Kidney (tissue), 22 donors: ENCODE measurements at regions of chr2 and their contacts with region 1.

Region 1: GRCh38 chr2:192162392-192163042 is 32.2 kb downstream of the TMEFF2 start:
- DNase-seq: peak in 4 of 5 donors; percentile 52 to 84 (median 76)
- H3K4me3 ChIP-seq: peak overlapping the region in 2 of 3 donors; percentile 31 to 38
- H3K27ac ChIP-seq: no peak overlapping the region
- H3K4me1 ChIP-seq: no peaks in the 10 kb centered on the region
- H3K27me3 ChIP-seq: no peaks in the 10 kb centered on the region
- CTCF ChIP-seq: peak; percentile 84

Region 2: DNA sequence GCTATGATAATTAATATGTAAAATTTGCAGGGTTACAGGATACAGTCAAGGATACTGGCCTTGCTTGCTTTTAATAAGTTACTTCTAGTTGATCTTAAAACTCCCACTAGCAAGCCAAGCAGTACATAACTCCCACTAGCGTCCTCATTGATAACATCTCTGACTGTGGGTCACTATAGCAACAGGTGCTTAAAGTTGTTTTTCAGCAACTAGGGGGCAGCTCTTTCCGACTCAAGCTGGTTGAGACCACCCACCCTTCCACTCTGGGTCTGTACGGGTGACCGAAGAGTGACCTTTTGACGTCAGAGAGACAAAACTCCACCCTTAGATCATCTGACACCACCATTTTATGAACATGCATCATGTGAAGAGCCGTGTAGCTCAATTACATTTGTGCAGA is 708.8 kb before region 1 on chr2:
- intact Hi-C with region 1: no loop called
- DNase-seq: peak in 4 of 5 donors; percentile 61 to 77 (median 75)
- H3K4me3 ChIP-seq: no peak overlapping the region
- H3K27ac ChIP-seq: peak overlapping the region; percentile 69 to 73
- H3K4me1 ChIP-seq: peaks cover 0 to 6% (median 3%) of the 10 kb centered on the region in 3 donors
- H3K27me3 ChIP-seq: no peaks in the 10 kb centered on the region
- CTCF ChIP-seq: no peak

Region 3: GRCh38 chr2:191811807-191812602 is 350.5 kb before region 1 on chr2:
- intact Hi-C with region 1: loop called (anchors 5 kb)
- DNase-seq: peak; percentile 58 to 87 (median 75)
- H3K4me3 ChIP-seq: peak overlapping the region in 1 of 3 donors; percentile 40
- H3K27ac ChIP-seq: no peak overlapping the region
- H3K4me1 ChIP-seq: no peaks in the 10 kb centered on the region
- H3K27me3 ChIP-seq: no peaks in the 10 kb centered on the region
- CTCF ChIP-seq: peak; percentile 77

Region 4: GRCh38 chr2:191950132-191950874 is 212.2 kb before region 1 on chr2:
- intact Hi-C with region 1: no loop called
- DNase-seq: no peak
- H3K4me3 ChIP-seq: no peak overlapping the region
- H3K27ac ChIP-seq: no peak overlapping the region
- H3K4me1 ChIP-seq: no peaks in the 10 kb centered on the region
- H3K27me3 ChIP-seq: no peaks in the 10 kb centered on the region
- CTCF ChIP-seq: no peak

Region 5: GRCh38 chr2:192327576-192327975 is 165.1 kb after region 1 on chr2:
- intact Hi-C with region 1: no loop called
- DNase-seq: no peak
- H3K4me3 ChIP-seq: no peak overlapping the region
- H3K27ac ChIP-seq: no peak overlapping the region
- H3K4me1 ChIP-seq: no peaks in the 10 kb centered on the region
- H3K27me3 ChIP-seq: no peaks in the 10 kb centered on the region
- CTCF ChIP-seq: no peak